ENCODE measurements at regions of chrX and their contacts with region 1.

Region 1: GRCh38 chrX:51496501-51497291 is at the start of gene NUDT11:
- DNase-seq: peak; percentile 16 to 58
- ATAC-seq: peak; percentile 59 to 95 (median 71)
- H3K4me3 ChIP-seq: peak within 1 kb of the TSS; percentile 18 to 58 (median 49)
- H3K27ac ChIP-seq: no peak within 1 kb of the TSS
- H3K4me1 ChIP-seq: no peaks in the 10 kb centered on the region
- H3K27me3 ChIP-seq: peaks cover 0 to 63% (median 17%) of the 10 kb centered on the region in 7 donors
- CTCF ChIP-seq: no peak
- total RNA-seq, gene NUDT11: 0.10 to 0.19 (median 0.15) TPM in 7 of 10 donors, not detected in the others

Region 2: DNA sequence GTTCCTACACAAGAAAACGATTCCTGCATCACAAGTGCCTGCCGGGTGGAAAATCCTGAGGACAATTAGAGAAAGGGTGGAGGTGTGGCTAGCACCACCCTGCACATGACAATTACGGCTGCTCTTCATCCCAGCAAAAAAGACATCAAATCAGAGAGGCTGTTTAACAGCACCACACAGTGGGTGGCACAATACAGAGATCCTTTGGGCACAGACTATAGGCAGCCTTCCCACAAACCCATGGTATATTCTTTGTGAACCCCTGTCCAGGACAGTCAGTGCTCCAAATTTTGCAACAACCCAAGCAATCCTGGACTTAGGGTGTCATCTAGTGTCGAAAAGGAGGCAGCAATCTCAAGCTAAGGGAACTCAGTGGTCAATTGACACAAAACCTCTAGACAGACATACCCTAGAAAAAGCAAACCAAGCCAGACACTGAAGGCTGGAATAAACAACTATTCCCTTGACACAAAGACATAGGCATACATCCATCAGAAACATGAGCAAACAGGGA is 448.8 kb before region 1 on chrX:
- intact Hi-C with region 1: loop called in 1 of 10 experiments (anchors 5 kb)
- DNase-seq: no peak
- ATAC-seq: no peak
- H3K4me3 ChIP-seq: no peak overlapping the region
- H3K27ac ChIP-seq: no peak overlapping the region
- H3K4me1 ChIP-seq: no peaks in the 10 kb centered on the region
- H3K27me3 ChIP-seq: peaks cover 0 to 74% (median 0%) of the 10 kb centered on the region in 7 donors
- CTCF ChIP-seq: no peak

Region 3: GRCh38 chrX:51144852-51145442 is 351.7 kb before region 1 on chrX:
- intact Hi-C with region 1: no loop called
- DNase-seq: no peak
- ATAC-seq: no peak
- H3K4me3 ChIP-seq: no peak overlapping the region
- H3K27ac ChIP-seq: no peak overlapping the region
- H3K4me1 ChIP-seq: no peaks in the 10 kb centered on the region
- H3K27me3 ChIP-seq: peaks cover 0 to 81% (median 0%) of the 10 kb centered on the region in 7 donors
- CTCF ChIP-seq: peak in 8 of 9 donors; percentile 7 to 67 (median 46)

Region 4: GRCh38 chrX:51292421-51292820 is 204.3 kb before region 1 on chrX:
- intact Hi-C with region 1: no loop called
- DNase-seq: no peak
- ATAC-seq: no peak
- H3K4me3 ChIP-seq: no peak overlapping the region
- H3K27ac ChIP-seq: no peak overlapping the region
- H3K4me1 ChIP-seq: no peaks in the 10 kb centered on the region
- H3K27me3 ChIP-seq: peaks cover 0 to 3% (median 0%) of the 10 kb centered on the region in 7 donors
- CTCF ChIP-seq: no peak

Region 5: GRCh38 chrX:51435101-51435500 is 61.6 kb before region 1 on chrX:
- intact Hi-C with region 1: no loop called
- DNase-seq: no peak
- ATAC-seq: no peak
- H3K4me3 ChIP-seq: no peak overlapping the region
- H3K27ac ChIP-seq: no peak overlapping the region
- H3K4me1 ChIP-seq: no peaks in the 10 kb centered on the region
- H3K27me3 ChIP-seq: peaks cover 0 to 42% (median 0%) of the 10 kb centered on the region in 7 donors
- CTCF ChIP-seq: no peak

Region 6: GRCh38 chrX:51598899-51599298 is 102.2 kb after region 1 on chrX:
- intact Hi-C with region 1: no loop called
- DNase-seq: no peak
- ATAC-seq: no peak
- H3K4me3 ChIP-seq: no peak overlapping the region
- H3K27ac ChIP-seq: no peak overlapping the region
- H3K4me1 ChIP-seq: no peaks in the 10 kb centered on the region
- H3K27me3 ChIP-seq: peaks cover 0 to 75% (median 0%) of the 10 kb centered on the region in 7 donors
- CTCF ChIP-seq: no peak

Measured in heart right ventricle (tissue), 16 donors.